HEK293T (cell line): ENCODE measurements at regions of chr1 and their contacts with region 1.

Region 1: DNA sequence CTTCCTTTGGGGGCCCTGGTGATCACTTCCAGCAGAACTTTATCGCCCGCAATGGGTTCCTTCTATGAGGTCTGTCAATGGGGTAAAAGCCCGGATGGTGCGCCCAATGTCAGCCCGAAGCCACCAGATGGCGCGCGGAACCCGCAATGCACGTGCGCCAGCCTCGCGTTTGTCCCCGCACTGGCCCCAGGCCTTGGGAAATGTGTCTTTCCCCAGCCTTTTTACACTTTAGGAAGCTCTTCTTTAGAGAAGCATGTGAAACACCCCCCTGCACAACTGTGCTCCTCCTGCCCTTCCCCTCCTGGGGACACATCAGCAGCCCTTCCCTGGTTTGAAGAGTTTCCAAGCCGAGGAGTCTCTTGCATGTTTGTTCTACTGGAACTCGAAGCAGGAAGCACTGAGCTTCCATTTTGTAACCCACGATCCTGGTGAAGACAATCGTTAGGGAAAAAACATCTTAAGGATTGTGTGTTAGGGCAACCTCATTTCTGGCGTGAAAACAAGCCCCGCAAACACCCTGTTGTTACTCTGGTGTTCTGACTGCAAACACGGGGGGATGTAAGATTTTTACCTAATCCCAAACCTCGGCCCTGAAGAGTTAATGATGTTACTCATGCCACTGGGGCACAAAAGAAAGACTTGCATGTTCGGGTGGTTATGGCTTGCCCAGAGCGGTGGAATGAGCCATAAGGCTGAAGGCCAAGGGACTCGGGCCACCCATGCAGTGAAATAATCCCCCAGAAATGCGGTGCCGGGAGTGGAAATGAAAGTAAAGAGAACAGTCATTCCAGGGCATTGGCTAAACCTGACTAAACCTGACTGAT is 20.4 kb upstream of the TARBP1 start:
- DNase-seq: peak; percentile 91

Region 2: GRCh38 chr1:234212764-234213657 is 286.3 kb before region 1 on chr1:
- CTCF ChIA-PET with region 1: no interaction called
- POLR2A ChIA-PET with region 1: no interaction called
- DNase-seq: peak; percentile 73

Region 3: DNA sequence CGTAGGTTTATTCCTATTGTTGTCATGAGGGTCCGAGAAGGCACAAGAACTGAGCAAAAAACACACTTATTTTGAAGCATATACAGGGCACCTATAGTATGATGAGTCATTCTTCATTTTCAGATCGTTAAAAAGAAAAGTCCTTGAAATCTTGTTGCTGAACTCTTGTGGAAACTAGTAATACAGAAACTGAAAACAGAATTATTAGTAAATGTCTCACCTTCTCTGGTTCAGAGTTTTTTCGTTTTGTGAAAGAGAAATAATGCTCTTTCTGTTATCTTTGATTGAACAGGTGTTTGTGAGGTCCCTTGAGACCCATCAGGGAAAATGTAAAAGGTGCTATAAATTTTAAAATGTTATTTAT is 228.1 kb before region 1 on chr1:
- CTCF ChIA-PET with region 1: no interaction called
- POLR2A ChIA-PET with region 1: no interaction called
- DNase-seq: no peak

Region 4: GRCh38 chr1:234486498-234487448 is 12.6 kb before region 1 on chr1:
- CTCF ChIA-PET with region 1: interaction called, 10 read pairs
- POLR2A ChIA-PET with region 1: no interaction called
- DNase-seq: no peak

Region 5: DNA sequence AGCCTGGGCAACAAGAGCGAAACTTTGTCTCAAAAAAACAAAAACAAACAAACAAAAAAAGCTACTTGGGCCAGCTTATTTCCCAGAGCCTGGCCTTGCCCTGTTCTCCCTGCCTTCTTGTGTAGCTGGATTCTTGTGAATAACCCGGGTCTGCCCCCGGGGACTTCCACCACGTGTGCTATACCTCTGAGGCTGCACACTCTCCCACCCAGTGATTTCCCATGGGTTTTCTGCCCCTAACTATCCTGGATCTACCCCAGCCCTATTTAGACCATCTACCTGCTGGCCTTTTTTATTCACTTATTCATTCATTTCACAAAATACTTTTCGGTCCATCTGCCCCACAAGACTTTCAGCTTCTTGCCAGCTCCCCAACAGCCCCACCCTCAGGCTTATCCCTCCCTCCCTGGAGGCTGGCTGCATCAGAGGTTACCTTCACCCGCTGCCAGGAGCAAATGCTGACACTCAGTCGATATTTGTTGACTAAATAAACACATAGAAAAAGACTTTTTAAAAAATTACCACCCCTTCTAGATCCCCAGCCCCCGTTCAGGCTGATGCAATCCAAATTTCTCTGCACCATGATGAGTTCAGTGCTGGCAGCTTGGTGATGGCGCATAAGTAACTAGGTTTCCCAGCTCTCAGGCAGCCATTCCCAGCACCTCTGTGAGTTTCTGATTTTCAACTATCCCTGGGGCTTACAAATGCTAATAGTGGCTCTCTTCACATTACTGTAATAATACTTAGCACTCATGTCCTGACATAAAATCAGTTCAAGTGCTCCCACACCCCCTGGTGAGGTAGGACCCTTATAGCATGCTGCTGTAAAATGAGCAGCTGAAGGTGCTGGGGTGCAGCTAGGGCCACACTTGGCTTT is 10.4 kb after region 1 on chr1:
- CTCF ChIA-PET with region 1: interaction called, 23 read pairs
- POLR2A ChIA-PET with region 1: interaction called, 6 read pairs
- DNase-seq: no peak

Region 6: DNA sequence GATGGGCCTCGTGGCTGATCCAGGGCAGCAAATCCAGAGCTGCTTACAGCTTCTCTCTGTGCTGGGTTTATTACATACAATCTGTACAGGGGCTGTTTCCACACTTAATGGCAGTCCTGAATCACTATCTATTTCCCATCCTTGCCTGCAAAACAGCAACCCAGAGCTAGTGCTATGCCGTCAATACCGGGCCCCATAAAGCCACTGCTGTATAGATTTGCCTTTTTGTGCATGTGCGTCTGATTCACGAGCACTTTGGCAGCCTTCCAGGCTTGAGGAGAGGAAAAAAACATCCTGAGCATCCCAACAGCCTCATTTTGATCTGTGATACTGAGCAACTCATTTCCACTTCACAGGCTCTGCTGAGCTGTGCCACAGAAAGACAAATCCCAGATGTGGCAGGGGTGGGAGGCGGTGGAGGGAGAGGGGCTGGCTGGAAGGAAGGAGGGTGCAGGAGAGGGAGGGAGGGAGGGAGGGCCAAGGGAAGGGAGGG is 44.8 kb after region 1 on chr1:
- CTCF ChIA-PET with region 1: interaction called, 12 read pairs
- POLR2A ChIA-PET with region 1: interaction called, 14 read pairs
- DNase-seq: peak; percentile 55

Region 7: DNA sequence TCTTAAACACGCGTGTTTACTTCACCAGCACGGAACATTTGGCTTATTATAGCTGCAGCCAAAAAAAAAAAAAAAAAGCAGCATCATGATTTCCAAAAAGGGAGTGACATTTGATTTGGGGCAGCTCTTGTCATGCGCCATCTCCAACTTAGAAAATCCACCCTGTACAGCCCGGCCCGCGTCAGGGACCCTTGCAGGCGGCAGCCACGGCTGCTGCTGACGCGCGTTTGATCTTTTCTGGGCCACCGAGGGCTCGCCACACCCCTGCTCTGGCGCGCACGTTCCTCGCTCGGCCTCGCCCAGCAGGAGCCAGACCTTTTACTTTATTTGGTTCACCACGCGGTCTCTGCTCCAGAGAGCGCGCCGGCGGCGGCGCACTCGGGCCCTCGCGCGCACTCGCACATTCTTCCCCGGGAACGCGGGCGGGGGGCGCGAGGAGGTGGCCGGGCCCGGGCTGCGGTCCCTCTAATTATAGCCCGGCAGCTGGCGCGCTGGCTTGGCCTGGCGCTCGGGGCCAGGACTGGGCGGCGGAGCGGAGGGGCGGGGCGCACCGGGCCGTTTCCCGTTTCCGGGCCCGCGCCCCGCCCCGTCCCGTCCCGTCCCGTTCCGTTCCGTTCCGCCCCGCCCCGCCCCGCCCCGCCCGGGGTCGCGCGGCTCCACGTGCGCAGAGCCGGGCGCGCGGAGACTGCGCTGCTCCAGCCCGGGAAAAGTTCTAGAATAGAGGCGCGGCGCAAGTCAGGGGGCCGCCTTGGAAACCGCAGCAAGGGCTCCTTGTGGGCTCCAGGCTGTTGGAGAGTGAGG is 100.5 kb after region 1 on chr1:
- CTCF ChIA-PET with region 1: interaction called, 14 read pairs
- POLR2A ChIA-PET with region 1: interaction called, 20 read pairs
- DNase-seq: peak; percentile 74

Region 8: DNA sequence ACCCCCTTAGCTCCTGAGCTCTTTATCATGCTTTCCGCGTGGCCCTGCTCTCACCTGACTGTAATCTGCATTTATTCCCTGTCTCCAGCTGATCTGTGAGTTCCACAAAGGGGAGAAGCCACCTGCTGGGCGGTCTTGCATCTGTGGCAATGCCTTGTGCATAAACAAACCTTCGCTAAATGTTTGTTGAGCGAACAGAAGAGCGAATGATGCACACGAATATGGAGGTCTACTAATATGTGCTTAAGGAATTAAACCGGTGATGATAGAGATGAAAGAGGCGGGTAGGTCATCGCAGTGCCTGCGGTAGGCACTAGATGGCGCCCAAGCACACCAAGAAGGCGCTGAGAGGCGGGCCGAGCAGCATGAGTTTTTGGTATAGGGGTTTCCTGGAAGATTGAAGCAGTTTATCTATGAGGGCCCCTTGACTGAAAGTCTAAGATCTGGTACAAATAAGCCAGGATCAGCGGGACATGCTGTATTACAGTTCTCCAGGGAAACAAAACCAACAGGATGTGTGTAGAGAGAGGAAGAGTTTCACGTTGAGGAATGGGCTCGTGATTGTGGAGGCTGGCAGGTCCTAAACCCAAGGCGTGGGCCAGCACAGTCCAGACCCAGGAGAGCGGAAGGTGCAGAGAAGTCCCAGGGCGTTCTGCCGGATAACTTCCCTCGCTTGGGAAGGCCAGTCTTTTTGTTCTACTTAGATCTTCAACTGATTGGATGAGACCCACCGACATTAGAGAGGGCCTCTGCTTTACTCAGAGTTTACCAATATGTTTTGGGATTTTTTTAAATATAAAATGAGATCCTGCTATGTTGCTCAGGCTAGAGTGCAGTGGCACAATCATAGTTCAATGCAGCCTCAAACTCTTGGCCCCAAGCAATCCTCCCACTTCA is 594.6 kb after region 1 on chr1:
- CTCF ChIA-PET with region 1: interaction called, 13 read pairs
- POLR2A ChIA-PET with region 1: no interaction called
- DNase-seq: peak; percentile 86